Activated CD4-positive, alpha-beta memory T cell treated with anti-CD3 and anti-CD28 coated beads for 36 hours (primary cell): ENCODE measurements at regions of chr13 and their contacts with region 1.

Region 1: GRCh38 chr13:75365724-75366173 is 116.2 kb downstream of the TBC1D4 start:
- DNase-seq: peak; percentile 36
- H3K4me3 Mint-ChIP-seq: peak overlapping the region; percentile 34
- H3K27ac Mint-ChIP-seq: peak overlapping the region; percentile 76
- H3K4me1 Mint-ChIP-seq: peaks cover 36% of the 10 kb centered on the region
- H3K27me3 Mint-ChIP-seq: peaks cover 3% of the 10 kb centered on the region

Region 2: GRCh38 chr13:75318138-75318833 is 47.5 kb before region 1 on chr13:
- CTCF ChIA-PET with region 1: interaction called, 3 read pairs
- POLR2A ChIA-PET with region 1: no interaction called
- intact Hi-C with region 1: loop called (anchors 1 kb)
- DNase-seq: peak; percentile 38
- H3K4me3 Mint-ChIP-seq: peak overlapping the region; percentile 58
- H3K27ac Mint-ChIP-seq: peak overlapping the region; percentile 91
- H3K4me1 Mint-ChIP-seq: peaks cover 55% of the 10 kb centered on the region
- H3K27me3 Mint-ChIP-seq: no peaks in the 10 kb centered on the region

Region 3: DNA sequence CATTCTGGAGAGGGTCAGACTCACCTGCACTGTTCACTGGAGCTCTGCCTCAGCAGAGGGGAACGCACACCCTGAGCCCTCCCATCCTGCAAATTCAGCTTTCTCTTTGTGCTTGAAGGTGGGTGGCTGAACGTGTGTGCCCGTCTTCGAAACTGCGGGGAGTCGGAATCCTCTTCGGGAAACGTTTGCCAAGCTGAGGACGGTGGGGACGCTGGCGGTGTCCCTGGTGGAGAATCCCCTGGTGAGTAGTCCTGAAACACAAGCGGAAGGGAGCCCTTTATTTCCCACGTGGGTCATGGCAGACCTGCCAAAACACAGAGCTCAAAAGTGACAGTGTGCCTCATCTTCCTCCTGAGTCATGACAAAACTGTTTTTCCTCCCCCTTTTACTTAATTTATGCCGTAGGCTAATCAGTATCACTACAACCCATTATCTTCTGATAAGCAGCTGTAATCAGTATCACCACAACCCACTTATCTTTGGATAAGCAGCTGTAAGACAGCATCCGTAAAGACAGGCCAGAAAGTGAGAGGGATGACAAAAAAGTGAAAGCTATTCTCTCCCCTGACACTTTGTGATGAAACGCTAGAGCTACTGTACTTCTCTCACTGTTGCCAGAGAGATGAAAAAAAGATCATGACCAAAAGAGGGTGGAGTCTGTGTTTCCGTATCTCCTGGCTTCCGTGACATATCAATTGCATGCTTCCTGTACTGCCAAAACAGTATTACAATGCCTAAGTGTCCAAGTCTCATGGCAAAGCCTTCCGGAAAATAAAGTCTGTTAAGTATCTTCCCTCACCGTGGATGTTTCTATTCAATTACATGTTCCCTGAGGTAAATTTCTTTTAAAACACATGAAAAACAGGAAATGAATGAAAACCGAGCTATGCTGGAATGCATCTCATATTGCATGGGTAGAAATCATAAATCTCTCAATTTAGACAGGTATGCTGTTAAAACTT is 39.3 kb before region 1 on chr13:
- CTCF ChIA-PET with region 1: interaction called, 8 read pairs
- POLR2A ChIA-PET with region 1: interaction called, 7 read pairs
- intact Hi-C with region 1: loop called (anchors 1 kb)
- DNase-seq: peak; percentile 78
- H3K4me3 Mint-ChIP-seq: peak overlapping the region; percentile 89
- H3K27ac Mint-ChIP-seq: peak overlapping the region; percentile 95
- H3K4me1 Mint-ChIP-seq: peaks cover 35% of the 10 kb centered on the region
- H3K27me3 Mint-ChIP-seq: no peaks in the 10 kb centered on the region

Region 4: DNA sequence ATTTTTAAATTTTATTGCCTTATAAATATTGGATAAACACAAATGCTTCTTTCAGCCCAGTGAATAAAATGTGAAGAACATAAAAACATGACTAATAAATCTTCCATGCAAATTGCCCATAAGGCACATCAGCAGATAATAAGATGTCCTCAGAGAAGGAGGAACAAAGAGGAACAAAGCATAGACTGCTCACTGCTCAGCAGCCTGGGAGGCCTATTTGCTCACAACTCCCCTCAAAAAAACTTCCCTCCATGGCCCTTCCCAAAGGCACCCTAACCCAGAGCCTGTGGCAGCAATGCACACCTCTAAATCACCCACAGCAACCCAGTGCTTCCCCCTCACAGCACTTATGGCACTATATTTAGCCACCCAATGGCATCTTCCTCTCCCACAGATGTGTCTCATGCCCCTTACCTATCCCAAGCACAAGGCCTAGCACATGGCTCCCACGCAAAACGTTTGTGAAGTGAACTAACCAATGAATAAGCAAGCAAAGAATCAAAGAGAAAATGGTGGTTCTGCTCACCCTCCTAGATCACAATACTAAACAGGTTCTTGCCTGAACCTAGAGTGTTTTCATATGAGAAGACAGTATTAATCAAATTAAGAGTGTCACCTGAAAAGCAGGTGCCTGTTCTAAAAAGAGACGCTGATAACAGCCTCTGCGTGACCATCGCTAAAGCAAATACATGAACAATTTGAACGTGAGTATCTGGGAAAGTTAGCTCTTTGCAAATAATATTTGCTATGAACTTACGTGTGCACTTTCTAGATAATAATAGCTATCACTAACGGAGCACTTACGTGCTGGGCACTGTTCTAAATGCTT is 19.3 kb after region 1 on chr13:
- CTCF ChIA-PET with region 1: no interaction called
- POLR2A ChIA-PET with region 1: no interaction called
- intact Hi-C with region 1: loop called (anchors 1 kb)
- DNase-seq: no peak
- H3K4me3 Mint-ChIP-seq: no peak overlapping the region
- H3K27ac Mint-ChIP-seq: no peak overlapping the region
- H3K4me1 Mint-ChIP-seq: peaks cover 10% of the 10 kb centered on the region
- H3K27me3 Mint-ChIP-seq: no peaks in the 10 kb centered on the region

Region 5: DNA sequence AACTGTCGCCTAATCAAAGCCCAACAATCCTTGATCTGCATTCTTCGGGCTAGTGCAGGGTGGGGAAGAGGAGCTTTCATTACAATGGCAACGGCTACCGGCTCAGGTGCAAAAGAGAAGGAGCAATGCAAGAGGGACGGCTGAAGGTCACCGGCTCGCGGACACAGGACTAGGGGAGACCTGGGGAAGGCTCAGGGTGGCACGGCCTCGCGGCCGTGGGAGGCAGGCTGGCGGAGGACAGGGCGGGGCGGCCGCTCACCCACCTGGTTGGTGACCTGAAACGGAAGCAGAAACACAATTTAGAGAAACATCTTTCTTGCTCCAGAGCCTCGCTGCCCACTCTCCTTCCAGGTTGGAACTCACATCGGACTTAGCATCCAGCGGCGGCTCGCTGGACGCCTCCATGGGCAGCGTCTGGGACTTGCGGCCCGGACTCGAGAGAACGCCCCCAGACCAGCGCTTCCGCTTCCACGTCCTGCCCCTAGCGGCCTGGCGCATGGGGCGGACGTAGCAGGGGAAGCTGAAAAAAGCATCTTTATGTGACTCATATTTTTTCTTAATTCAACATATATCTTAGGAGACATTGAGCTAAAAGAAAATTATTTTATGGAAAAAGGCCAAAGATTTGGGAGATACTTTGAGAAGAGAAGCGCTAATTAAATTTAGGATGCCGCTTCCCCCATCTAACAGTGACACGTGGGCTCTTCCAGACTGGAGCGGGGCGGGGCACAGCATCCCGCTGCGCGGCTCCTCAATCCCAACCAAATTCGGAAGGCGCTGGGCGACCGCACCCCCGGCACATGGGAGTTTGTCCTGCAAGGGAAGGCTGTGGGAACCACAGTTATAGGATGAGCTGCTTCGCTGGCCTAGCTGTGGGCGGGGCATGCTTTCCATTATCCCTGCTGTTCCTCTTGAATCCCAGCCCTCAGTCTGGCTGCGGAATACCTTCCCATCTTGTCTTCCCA is 171.9 kb after region 1 on chr13 and contains the start of gene COMMD6:
- CTCF ChIA-PET with region 1: no interaction called
- POLR2A ChIA-PET with region 1: no interaction called
- intact Hi-C with region 1: loop called (anchors 2 kb)
- DNase-seq: peak; percentile 80
- H3K4me3 Mint-ChIP-seq: peak within 1 kb of the TSS; percentile 98
- H3K27ac Mint-ChIP-seq: peak within 1 kb of the TSS; percentile 85
- H3K4me1 Mint-ChIP-seq: peaks cover 22% of the 10 kb centered on the region
- H3K27me3 Mint-ChIP-seq: no peaks in the 10 kb centered on the region
- total RNA-seq, gene COMMD6: 130 to 136 TPM

Region 6: GRCh38 chr13:75635828-75636435 is 270.2 kb after region 1 on chr13 and contains the start of gene LMO7:
- CTCF ChIA-PET with region 1: no interaction called
- POLR2A ChIA-PET with region 1: no interaction called
- intact Hi-C with region 1: loop called (anchors 10 kb)
- DNase-seq: peak; percentile 59
- H3K4me3 Mint-ChIP-seq: peak within 1 kb of the TSS; percentile 74
- H3K27ac Mint-ChIP-seq: no peak within 1 kb of the TSS
- H3K4me1 Mint-ChIP-seq: peaks cover 10% of the 10 kb centered on the region
- H3K27me3 Mint-ChIP-seq: peaks cover 10% of the 10 kb centered on the region
- total RNA-seq, gene LMO7: 7.8 to 8.7 TPM